ENCODE measurements at regions of chr18 and their contacts with region 1.

Region 1: GRCh38 chr18:74353169-74353775 is 37.6 kb downstream of the C18orf63 start:
- DNase-seq: peak; percentile 27 to 83 (median 57)
- ATAC-seq: peak; percentile 92
- H3K4me3 ChIP-seq: no peak overlapping the region
- H3K4me3 Mint-ChIP-seq: no peak overlapping the region
- H3K27ac ChIP-seq: no peak overlapping the region
- H3K27ac Mint-ChIP-seq: no peak overlapping the region
- H3K4me1 ChIP-seq: peaks cover 4% of the 10 kb centered on the region
- H3K4me1 Mint-ChIP-seq: peaks cover 11% of the 10 kb centered on the region
- H3K27me3 ChIP-seq: no peaks in the 10 kb centered on the region
- H3K27me3 Mint-ChIP-seq: no peaks in the 10 kb centered on the region
- CTCF ChIP-seq: peak; percentile 77

Region 2: GRCh38 chr18:72419914-72420313 is 1933.4 kb before region 1 on chr18:
- CTCF ChIA-PET with region 1: no interaction called
- POLR2A ChIA-PET with region 1: no interaction called
- intact Hi-C with region 1: no loop called
- DNase-seq: no peak
- ATAC-seq: no peak
- H3K4me3 ChIP-seq: no peak overlapping the region
- H3K4me3 Mint-ChIP-seq: no peak overlapping the region
- H3K27ac ChIP-seq: no peak overlapping the region
- H3K27ac Mint-ChIP-seq: no peak overlapping the region
- H3K4me1 ChIP-seq: no peaks in the 10 kb centered on the region
- H3K4me1 Mint-ChIP-seq: no peaks in the 10 kb centered on the region
- H3K27me3 ChIP-seq: no peaks in the 10 kb centered on the region
- H3K27me3 Mint-ChIP-seq: no peaks in the 10 kb centered on the region
- CTCF ChIP-seq: no peak

Region 3: GRCh38 chr18:74370115-74370514 is 16.8 kb after region 1 on chr18:
- CTCF ChIA-PET with region 1: interaction called, 61 read pairs
- POLR2A ChIA-PET with region 1: interaction called, 7 read pairs
- intact Hi-C with region 1: loop called (anchors 1 to 2 kb)
- DNase-seq: no peak
- ATAC-seq: no peak
- H3K4me3 ChIP-seq: no peak overlapping the region
- H3K4me3 Mint-ChIP-seq: no peak overlapping the region
- H3K27ac ChIP-seq: no peak overlapping the region
- H3K27ac Mint-ChIP-seq: no peak overlapping the region
- H3K4me1 ChIP-seq: peaks cover 55% of the 10 kb centered on the region
- H3K4me1 Mint-ChIP-seq: peaks cover 56% of the 10 kb centered on the region
- H3K27me3 ChIP-seq: peaks cover 0 to 3% of the 10 kb centered on the region in 2 experiments
- H3K27me3 Mint-ChIP-seq: peaks cover 2% of the 10 kb centered on the region
- CTCF ChIP-seq: no peak

Region 4: DNA sequence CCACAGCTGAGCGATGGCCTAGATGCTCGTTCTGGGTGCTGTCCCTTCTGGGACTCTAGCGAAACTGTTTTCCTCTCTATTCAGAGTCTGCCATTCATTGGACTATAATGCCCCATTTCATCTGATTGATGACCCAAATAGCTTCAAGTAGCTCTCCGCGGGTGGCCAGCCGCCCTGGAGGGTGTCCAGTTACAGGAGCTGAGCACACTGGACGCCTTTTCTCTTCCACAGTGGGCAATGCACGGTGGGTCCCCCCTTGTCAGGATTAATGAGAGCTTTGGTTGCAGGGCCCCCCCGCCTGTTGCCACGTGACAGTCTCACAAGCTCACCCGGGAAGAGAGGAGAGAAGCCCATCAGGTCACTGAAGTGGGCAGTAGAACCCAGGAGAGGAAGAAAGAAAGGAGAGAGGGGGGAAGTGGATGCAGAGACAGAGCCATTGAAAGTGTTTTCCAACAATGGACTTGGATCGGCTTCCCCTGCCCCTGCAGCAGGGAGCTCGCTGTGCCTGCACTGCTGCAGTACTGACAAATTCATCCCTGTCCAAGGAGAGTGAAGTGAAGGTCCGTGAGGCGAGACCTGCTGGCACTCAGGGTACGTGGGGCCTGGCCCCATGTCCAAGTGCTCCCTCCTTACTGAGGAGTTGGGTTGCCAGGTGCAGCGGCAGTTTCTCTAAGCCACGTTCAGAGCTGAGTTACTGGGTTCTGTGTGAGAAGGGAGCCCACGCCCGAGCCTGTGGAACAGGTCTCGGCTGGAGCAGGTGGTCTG is 59.0 kb after region 1 on chr18:
- CTCF ChIA-PET with region 1: interaction called, 6 read pairs
- POLR2A ChIA-PET with region 1: no interaction called
- intact Hi-C with region 1: loop called in 1 of 2 experiments (anchors 5 kb)
- DNase-seq: no peak
- ATAC-seq: no peak
- H3K4me3 ChIP-seq: no peak overlapping the region
- H3K4me3 Mint-ChIP-seq: no peak overlapping the region
- H3K27ac ChIP-seq: no peak overlapping the region
- H3K27ac Mint-ChIP-seq: no peak overlapping the region
- H3K4me1 ChIP-seq: peaks cover 19% of the 10 kb centered on the region
- H3K4me1 Mint-ChIP-seq: peaks cover 22% of the 10 kb centered on the region
- H3K27me3 ChIP-seq: no peaks in the 10 kb centered on the region
- H3K27me3 Mint-ChIP-seq: no peaks in the 10 kb centered on the region
- CTCF ChIP-seq: no peak

Region 5: DNA sequence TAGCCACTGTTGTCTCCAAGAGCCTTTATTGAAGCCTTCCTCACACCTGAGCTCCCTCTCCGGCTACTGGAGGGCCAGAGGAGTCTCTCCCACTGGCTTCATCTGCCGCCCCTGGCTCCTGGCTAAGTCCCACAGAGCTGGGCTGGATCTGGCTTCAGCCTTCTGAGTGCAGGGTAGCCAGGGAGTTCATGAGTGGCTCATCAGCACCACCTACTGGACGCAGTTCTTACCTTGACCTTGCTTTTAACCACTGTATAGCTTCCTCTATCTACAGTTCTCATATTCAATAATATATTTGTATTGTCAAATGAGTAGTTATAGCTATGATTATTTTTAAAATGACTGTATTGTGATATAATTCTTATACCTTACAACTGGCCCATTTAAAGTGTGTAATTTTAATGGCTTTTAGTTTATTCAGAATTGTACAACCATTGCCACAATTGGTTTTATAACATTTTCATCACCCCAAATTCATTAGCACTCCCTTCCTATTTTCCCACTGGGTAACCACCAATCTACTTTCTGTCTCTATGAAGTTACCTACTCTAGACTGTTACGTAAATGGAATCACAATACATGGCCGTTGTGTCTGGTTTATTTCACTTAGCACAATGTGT is 198.8 kb after region 1 on chr18:
- CTCF ChIA-PET with region 1: interaction called, 47 read pairs
- POLR2A ChIA-PET with region 1: no interaction called
- intact Hi-C with region 1: loop called (anchors 1 kb)
- DNase-seq: peak; percentile 55 to 85 (median 78)
- ATAC-seq: peak; percentile 91
- H3K4me3 ChIP-seq: no peak overlapping the region
- H3K4me3 Mint-ChIP-seq: no peak overlapping the region
- H3K27ac ChIP-seq: no peak overlapping the region
- H3K27ac Mint-ChIP-seq: no peak overlapping the region
- H3K4me1 ChIP-seq: no peaks in the 10 kb centered on the region
- H3K4me1 Mint-ChIP-seq: no peaks in the 10 kb centered on the region
- H3K27me3 ChIP-seq: no peaks in the 10 kb centered on the region
- H3K27me3 Mint-ChIP-seq: peaks cover 13% of the 10 kb centered on the region
- CTCF ChIP-seq: peak; percentile 92

Region 6: DNA sequence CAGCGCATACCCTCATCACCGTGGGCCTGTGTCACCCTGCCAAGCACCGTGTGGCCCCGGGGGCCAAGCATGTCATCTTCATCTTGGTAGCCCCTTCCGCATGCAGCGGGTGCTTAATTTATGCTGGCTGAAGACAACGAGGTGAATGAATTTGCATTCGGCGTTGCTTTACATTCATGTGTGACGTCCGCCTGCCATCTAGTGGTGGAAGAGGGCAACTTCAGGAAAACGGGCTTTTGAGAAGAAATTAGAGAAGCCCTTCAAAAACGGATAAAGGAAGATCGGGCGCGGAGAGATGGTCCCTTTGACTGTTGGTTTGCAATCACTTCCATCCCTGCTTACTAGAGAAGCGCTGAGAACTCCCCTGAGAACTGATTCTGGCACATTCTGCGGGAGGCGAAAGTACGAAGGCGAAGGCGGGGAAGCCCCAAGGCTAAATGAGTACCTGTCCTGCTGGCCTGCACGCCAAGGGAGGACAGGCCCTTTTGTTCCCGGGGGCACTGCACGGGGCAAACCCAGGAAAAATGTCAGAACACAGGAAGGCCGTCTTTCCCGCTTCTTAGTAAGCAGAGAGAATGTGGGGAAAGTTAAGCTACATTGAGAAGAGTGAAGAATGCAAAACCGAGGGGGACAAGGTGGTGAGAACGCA is 1995.9 kb after region 1 on chr18:
- CTCF ChIA-PET with region 1: no interaction called
- POLR2A ChIA-PET with region 1: no interaction called
- intact Hi-C with region 1: loop called in 1 of 2 experiments (anchors 5 kb)
- DNase-seq: peak in 8 of 9 experiments; percentile 40 to 74 (median 60)
- ATAC-seq: peak; percentile 49
- H3K4me3 ChIP-seq: no peak overlapping the region
- H3K4me3 Mint-ChIP-seq: no peak overlapping the region
- H3K27ac ChIP-seq: no peak overlapping the region
- H3K27ac Mint-ChIP-seq: no peak overlapping the region
- H3K4me1 ChIP-seq: no peaks in the 10 kb centered on the region
- H3K4me1 Mint-ChIP-seq: peaks cover 4% of the 10 kb centered on the region
- H3K27me3 ChIP-seq: no peaks in the 10 kb centered on the region
- H3K27me3 Mint-ChIP-seq: peaks cover 7% of the 10 kb centered on the region
- CTCF ChIP-seq: peak; percentile 77